Caco-2 (cell line): ENCODE measurements at regions of chr13 and their contacts with region 1.

Region 1: GRCh38 chr13:29923554-29924481 is 73.4 kb upstream of the UBL3 start:
- DNase-seq: peak; percentile 95 to 97
- H3K4me3 ChIP-seq: no peak overlapping the region
- H3K4me3 Mint-ChIP-seq: peak overlapping the region; percentile 41
- H3K27ac Mint-ChIP-seq: peak overlapping the region; percentile 92
- H3K4me1 ChIP-seq: peaks cover 38% of the 10 kb centered on the region
- H3K4me1 Mint-ChIP-seq: peaks cover 37% of the 10 kb centered on the region
- H3K27me3 ChIP-seq: no peaks in the 10 kb centered on the region
- H3K27me3 Mint-ChIP-seq: no peaks in the 10 kb centered on the region
- CTCF ChIP-seq: peak; percentile 97

Region 2: GRCh38 chr13:29595380-29596063 is 328.3 kb before region 1 on chr13 and contains the start of gene SLC7A1:
- CTCF ChIA-PET with region 1: no interaction called
- POLR2A ChIA-PET with region 1: no interaction called
- intact Hi-C with region 1: loop called (anchors 1 kb)
- DNase-seq: peak; percentile 88 to 94
- H3K4me3 ChIP-seq: peak within 1 kb of the TSS; percentile 92
- H3K4me3 Mint-ChIP-seq: peak within 1 kb of the TSS; percentile 88
- H3K27ac Mint-ChIP-seq: peak within 1 kb of the TSS; percentile 91
- H3K4me1 ChIP-seq: peaks cover 11% of the 10 kb centered on the region
- H3K4me1 Mint-ChIP-seq: peaks cover 21% of the 10 kb centered on the region
- H3K27me3 ChIP-seq: 0 out of 2 replicates have a peak, but pooled peaks cover 1% of the 10 kb centered on the region
- H3K27me3 Mint-ChIP-seq: peaks cover 2% of the 10 kb centered on the region
- CTCF ChIP-seq: peak in 1 of 2 experiments; percentile 20
- total RNA-seq, gene SLC7A1: 164 and 180 TPM in 2 replicates

Region 3: DNA sequence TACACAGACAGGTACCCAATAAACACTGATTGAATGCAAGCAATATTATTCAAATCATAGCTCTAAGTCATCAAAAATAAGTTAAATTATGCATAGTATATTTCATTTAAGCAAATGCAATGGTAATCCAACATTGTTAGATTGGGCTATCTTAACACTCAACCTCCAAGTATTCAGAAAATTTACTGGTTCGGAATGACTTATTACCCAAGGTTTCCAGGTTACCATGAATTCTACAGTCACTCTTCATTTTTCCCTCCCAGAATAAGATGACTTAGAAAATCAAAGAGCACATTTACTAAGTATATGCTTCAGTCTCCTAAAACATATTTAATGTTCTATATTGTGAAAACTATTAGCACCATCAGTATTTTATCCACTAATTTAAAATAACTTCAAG is 79.4 kb before region 1 on chr13:
- CTCF ChIA-PET with region 1: interaction called, 39 read pairs
- POLR2A ChIA-PET with region 1: interaction called, 44 read pairs
- intact Hi-C with region 1: no loop called
- DNase-seq: no peak
- H3K4me3 ChIP-seq: no peak overlapping the region
- H3K4me3 Mint-ChIP-seq: no peak overlapping the region
- H3K27ac Mint-ChIP-seq: peak overlapping the region; percentile 32
- H3K4me1 ChIP-seq: peaks cover 58% of the 10 kb centered on the region
- H3K4me1 Mint-ChIP-seq: peaks cover 41% of the 10 kb centered on the region
- H3K27me3 ChIP-seq: no peaks in the 10 kb centered on the region
- H3K27me3 Mint-ChIP-seq: no peaks in the 10 kb centered on the region
- CTCF ChIP-seq: no peak

Region 4: GRCh38 chr13:29877456-29878078 is 46.3 kb before region 1 on chr13:
- CTCF ChIA-PET with region 1: interaction called, 3 read pairs
- POLR2A ChIA-PET with region 1: no interaction called
- intact Hi-C with region 1: loop called (anchors 1 kb)
- DNase-seq: peak in 1 of 2 experiments; percentile 63
- H3K4me3 ChIP-seq: no peak overlapping the region
- H3K4me3 Mint-ChIP-seq: peak overlapping the region; percentile 59
- H3K27ac Mint-ChIP-seq: peak overlapping the region; percentile 25
- H3K4me1 ChIP-seq: peaks cover 23% of the 10 kb centered on the region
- H3K4me1 Mint-ChIP-seq: peaks cover 20% of the 10 kb centered on the region
- H3K27me3 ChIP-seq: no peaks in the 10 kb centered on the region
- H3K27me3 Mint-ChIP-seq: no peaks in the 10 kb centered on the region
- CTCF ChIP-seq: no peak

Region 5: DNA sequence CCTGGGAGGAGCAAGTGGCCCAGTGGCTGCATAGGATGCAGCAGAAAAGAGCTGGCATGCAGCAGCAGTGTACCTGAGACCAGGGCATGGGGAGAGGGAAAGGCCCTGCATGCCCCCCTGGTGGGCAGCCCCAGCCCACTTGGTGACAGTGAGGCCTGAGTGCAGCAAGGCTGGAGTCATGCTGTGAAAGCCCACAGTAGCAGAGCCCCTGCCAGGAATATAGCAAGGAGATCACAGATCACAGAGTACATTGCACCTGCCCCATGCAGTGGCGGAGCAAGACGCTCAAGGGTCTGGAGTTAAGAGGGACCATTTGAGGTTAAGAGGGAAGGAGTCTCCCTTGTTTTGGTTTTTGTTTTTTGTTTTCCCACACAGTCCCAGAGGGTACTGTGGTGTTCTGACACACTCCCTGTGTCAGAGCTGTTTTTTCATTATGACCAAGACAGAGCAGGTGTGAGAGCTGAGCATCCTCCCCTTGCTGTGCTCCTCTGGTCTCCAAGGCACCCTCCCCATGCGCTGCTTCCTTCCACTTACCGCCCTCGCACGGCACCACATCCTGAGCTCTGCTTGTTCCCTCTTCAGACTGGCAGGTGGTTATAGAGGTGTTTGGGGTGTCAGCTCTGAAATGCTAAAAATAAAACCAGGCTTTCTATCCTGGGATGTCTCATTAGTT is 11.6 kb after region 1 on chr13:
- CTCF ChIA-PET with region 1: interaction called, 18 read pairs
- POLR2A ChIA-PET with region 1: no interaction called
- intact Hi-C with region 1: no loop called
- DNase-seq: no peak
- H3K4me3 ChIP-seq: no peak overlapping the region
- H3K4me3 Mint-ChIP-seq: no peak overlapping the region
- H3K27ac Mint-ChIP-seq: no peak overlapping the region
- H3K4me1 ChIP-seq: no peaks in the 10 kb centered on the region
- H3K4me1 Mint-ChIP-seq: peaks cover 5% of the 10 kb centered on the region
- H3K27me3 ChIP-seq: no peaks in the 10 kb centered on the region
- H3K27me3 Mint-ChIP-seq: no peaks in the 10 kb centered on the region
- CTCF ChIP-seq: no peak

Region 6: DNA sequence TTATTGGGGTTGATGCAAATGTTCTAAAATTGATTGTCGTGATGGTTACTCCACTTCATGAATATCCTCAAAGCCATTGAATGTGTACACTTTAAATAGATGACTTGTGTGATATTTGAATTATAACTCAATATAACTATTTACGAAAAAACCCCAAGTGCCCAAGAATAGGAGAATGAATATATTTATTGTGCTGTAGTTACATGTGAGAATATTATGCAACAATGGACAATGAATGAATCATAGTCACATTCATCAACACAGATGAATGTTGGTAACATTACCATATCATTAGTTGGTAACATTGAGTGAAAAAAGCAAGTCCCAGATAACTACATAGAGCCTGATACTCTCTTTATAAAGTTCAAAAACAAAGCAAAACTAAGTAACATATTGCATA is 54.4 kb after region 1 on chr13:
- CTCF ChIA-PET with region 1: no interaction called
- POLR2A ChIA-PET with region 1: no interaction called
- intact Hi-C with region 1: no loop called
- DNase-seq: no peak
- H3K4me3 ChIP-seq: no peak overlapping the region
- H3K4me3 Mint-ChIP-seq: no peak overlapping the region
- H3K27ac Mint-ChIP-seq: no peak overlapping the region
- H3K4me1 ChIP-seq: no peaks in the 10 kb centered on the region
- H3K4me1 Mint-ChIP-seq: no peaks in the 10 kb centered on the region
- H3K27me3 ChIP-seq: no peaks in the 10 kb centered on the region
- H3K27me3 Mint-ChIP-seq: no peaks in the 10 kb centered on the region
- CTCF ChIP-seq: no peak